ENCODE measurements at regions of chr12 and their contacts with region 1.

Region 1: GRCh38 chr12:106386813-106387535 is 29.4 kb downstream of the POLR3B start:
- DNase-seq: peak in 1 of 5 donors; percentile 52
- H3K4me3 ChIP-seq: no peak overlapping the region
- H3K27ac ChIP-seq: no peak overlapping the region
- H3K4me1 ChIP-seq: no peaks in the 10 kb centered on the region
- H3K27me3 ChIP-seq: no peaks in the 10 kb centered on the region
- CTCF ChIP-seq: no peak

Region 2: DNA sequence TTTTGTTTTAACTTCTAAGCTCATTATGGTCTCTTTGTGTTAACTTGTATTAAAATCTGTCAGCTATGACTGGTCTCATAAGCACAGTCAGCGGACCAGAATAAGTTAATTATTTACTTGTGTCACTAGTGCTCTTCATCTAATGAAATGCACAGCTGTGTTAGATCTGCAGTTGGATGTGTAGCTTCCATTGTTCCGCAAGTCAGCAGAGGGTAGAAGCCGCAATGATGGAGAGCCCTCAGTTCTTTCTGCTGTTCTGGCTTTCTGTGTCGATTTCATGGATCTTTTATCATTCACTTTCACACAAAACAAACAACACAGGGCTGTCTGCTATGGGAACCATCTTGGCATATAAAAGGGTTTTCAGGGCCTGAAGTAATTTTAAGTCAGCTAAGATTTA is 106.6 kb after region 1 on chr12:
- intact Hi-C with region 1: no loop called
- DNase-seq: peak in 4 of 5 donors; percentile 28 to 84 (median 64)
- H3K4me3 ChIP-seq: no peak overlapping the region
- H3K27ac ChIP-seq: no peak overlapping the region
- H3K4me1 ChIP-seq: peaks cover 0 to 8% (median 0%) of the 10 kb centered on the region in 3 donors
- H3K27me3 ChIP-seq: no peaks in the 10 kb centered on the region
- CTCF ChIP-seq: no peak

Region 3: DNA sequence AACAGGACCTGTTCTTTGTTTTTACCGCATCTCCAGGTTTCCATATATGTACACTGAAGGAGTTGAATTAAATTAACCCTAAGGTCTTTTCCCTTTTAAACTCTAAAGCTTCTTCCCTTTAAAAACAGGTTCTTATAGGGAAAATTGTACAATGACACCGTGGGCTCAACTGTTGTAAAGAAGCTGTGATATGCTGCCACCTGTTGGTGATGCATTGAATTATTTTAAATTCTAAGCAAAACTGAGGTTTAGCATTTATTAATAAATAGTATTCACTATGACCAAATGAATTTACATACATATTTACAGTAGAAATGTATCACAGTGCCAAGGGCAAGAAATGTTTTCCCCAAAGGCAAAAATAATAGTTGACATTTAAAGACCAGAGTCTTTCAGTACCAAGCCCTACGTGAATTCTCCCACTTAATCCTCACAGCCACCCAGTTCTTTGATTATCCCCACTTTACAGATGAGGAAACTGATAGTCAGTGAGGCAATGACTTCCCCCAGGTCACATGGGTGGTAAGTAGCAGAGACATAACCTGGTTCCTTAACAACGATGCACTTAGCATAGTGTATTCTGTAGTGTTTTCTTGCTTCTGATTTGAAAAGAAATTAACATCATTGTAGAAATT is 533.1 kb after region 1 on chr12:
- intact Hi-C with region 1: loop called (anchors 10 kb)
- DNase-seq: peak in 2 of 5 donors; percentile 60 to 73
- H3K4me3 ChIP-seq: no peak overlapping the region
- H3K27ac ChIP-seq: no peak overlapping the region
- H3K4me1 ChIP-seq: no peaks in the 10 kb centered on the region
- H3K27me3 ChIP-seq: no peaks in the 10 kb centered on the region
- CTCF ChIP-seq: peak; percentile 86